GM13977 (cell line): ENCODE measurements at regions of chr6 and their contacts with region 1.

Region 1: DNA sequence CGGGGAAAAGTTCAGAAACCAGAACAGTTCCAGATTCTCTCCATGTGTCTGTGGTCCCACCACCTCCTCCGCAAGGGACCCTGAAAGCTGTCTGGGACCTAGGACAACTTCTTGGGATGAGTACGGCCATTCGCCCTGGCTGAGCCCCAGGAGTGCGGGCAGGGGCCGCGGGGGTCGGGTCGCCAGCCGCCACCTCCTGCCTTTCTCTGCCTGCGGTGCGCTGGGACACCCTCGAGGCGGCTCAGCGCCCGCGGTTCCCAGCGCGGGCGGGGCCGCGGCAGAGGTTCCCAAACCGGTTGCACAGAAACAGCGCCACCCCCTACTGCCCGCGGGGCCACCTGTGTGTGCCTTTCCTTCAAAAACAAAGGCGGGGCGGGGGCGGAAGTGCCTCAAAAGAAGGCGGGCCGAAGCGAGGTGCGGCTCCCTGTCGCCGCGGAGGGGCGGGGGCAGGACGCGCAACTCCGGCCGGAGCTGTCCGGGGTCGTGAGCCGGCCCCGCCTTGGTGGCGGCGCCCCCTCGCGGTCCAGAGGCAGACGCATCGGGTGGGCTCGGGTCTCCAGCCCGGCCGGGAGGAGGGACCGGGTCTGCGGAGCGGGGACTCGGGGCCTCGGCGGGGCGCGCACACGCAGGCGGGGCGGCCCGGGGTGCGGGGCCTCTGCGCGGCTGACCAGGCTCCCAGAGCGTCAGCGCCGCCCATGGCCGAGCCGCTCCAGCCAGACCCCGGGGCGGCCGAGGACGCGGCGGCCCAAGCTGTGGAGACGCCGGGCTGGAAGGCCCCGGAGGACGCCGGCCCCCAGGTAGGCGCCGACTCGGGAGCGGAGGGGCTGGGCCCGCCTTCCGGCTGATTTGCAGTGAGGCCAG is at the start of gene HEBP2:
- DNase-seq: peak; percentile 93
- CTCF ChIP-seq: peak; percentile 52

Region 2: DNA sequence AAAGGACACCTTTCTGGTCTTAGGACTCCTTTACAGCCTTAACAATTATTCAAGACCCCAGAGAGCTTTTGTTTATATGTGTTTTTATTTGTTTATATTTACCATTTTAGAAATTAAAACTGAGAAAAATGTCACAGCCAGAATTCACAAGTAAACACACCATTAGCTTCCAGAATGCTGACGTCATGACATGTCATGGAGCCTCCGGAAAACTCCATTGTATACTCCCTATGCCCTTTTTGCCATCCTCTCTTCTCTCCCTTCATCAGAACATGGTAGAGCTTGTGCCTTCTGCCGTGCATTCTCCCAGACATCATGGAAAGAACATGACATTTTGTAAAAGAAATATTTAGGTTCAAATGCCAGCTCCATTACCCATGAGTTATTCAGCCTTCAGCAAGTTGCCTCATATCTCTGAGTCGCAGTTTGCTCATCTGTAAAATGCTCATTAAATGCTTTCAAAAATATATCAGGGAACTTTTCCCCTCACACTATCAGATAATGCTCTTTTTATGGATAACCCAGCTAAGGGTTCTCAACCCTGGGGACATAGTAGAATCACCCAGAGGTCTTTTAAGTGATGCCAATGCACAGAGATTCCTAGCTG is 509.1 kb before region 1 on chr6:
- in situ Hi-C with region 1: no loop called
- DNase-seq: no peak
- CTCF ChIP-seq: no peak

Region 3: DNA sequence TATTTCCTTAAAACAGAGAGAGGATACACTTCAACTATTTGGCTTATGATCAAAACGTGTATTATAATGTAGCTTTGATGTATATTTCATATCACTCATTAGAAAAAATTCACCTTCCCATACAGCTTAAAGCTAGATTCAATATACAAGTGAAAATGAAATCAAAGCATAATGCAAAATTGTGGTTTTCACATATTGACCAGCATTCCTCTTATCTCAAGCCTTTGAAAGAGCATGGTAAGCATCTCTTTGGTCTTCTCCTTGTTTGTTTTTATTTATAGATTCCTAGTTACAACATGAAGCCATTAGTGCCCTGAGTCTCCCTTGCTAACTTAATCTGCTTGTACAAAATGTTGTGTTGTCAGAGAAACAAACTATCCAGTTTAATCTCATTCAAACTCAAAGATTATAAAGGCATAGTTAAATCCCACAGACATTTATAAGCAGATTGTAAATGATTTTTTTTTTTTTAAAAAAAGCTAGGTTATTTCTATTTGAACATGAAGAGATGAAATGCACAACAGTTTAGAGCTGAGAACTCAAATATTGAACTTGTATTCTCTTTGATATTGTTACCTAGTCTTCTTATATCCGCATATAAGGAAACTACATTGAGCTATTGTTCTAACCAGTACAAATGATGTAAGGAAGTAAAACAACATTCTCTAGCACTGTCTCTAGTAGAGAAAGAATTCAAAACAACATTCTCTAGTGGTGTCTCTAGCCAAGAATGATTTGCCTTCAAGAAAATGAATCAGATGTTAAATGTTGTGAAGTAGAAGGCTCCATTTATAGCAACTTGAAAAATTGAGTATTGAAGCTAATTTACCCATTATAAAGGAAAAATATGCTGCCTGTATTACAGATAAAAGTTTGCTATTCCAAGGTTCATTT is 57.5 kb before region 1 on chr6:
- in situ Hi-C with region 1: no loop called
- DNase-seq: no peak
- CTCF ChIP-seq: no peak

Region 4: DNA sequence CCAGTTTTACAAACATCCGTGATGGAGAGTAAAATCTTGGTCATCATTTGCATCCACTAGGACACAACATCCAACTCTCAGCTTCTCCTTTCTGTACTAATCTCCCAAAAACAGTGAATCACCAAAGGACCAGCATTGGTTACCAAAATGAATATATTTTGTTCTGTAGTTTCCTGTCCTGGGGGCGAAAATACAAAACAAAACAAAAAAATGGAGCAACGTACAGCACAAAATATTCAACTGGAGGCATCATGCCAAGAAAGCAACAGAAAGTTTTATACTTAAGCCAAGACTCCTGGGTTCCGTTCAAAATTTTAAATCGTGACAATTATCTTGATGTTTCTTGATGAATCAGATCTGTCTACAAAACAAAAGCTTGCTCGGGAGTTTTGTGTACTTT is 243.0 kb after region 1 on chr6:
- in situ Hi-C with region 1: no loop called
- DNase-seq: no peak
- CTCF ChIP-seq: no peak

Region 5: GRCh38 chr6:138773177-138774091 is 369.4 kb after region 1 on chr6 and contains the start of gene CCDC28A:
- in situ Hi-C with region 1: loop called (anchors 25 kb)
- DNase-seq: peak; percentile 86
- CTCF ChIP-seq: no peak

Region 6: GRCh38 chr6:139204978-139205377 is 800.9 kb after region 1 on chr6:
- in situ Hi-C with region 1: no loop called
- DNase-seq: no peak
- CTCF ChIP-seq: no peak